Body of pancreas (tissue), 4 donors: ENCODE measurements at regions of chr11 and their contacts with region 1.

Region 1: GRCh38 chr11:31030138-31030792 is 339.3 kb downstream of the DCDC1 start:
- DNase-seq: no peak
- ATAC-seq: no peak
- H3K4me3 ChIP-seq: no peak overlapping the region
- H3K27ac ChIP-seq: no peak overlapping the region
- H3K4me1 ChIP-seq: no peaks in the 10 kb centered on the region
- H3K27me3 ChIP-seq: no peaks in the 10 kb centered on the region
- CTCF ChIP-seq: no peak
- POLR2A ChIP-seq: no peak

Region 2: GRCh38 chr11:30917859-30918478 is 112.3 kb before region 1 on chr11:
- intact Hi-C with region 1: no loop called
- DNase-seq: peak in 3 of 4 donors; percentile 15 to 35 (median 18)
- ATAC-seq: peak; percentile 53
- H3K4me3 ChIP-seq: no peak overlapping the region
- H3K27ac ChIP-seq: no peak overlapping the region
- H3K4me1 ChIP-seq: no peaks in the 10 kb centered on the region
- H3K27me3 ChIP-seq: no peaks in the 10 kb centered on the region
- CTCF ChIP-seq: peak; percentile 38 to 86 (median 65)
- POLR2A ChIP-seq: no peak

Region 3: GRCh38 chr11:30984442-30984816 is 45.8 kb before region 1 on chr11:
- intact Hi-C with region 1: loop called (anchors 10 kb)
- DNase-seq: no peak
- ATAC-seq: no peak
- H3K4me3 ChIP-seq: no peak overlapping the region
- H3K27ac ChIP-seq: no peak overlapping the region
- H3K4me1 ChIP-seq: no peaks in the 10 kb centered on the region
- H3K27me3 ChIP-seq: no peaks in the 10 kb centered on the region
- CTCF ChIP-seq: no peak
- POLR2A ChIP-seq: no peak

Region 4: DNA sequence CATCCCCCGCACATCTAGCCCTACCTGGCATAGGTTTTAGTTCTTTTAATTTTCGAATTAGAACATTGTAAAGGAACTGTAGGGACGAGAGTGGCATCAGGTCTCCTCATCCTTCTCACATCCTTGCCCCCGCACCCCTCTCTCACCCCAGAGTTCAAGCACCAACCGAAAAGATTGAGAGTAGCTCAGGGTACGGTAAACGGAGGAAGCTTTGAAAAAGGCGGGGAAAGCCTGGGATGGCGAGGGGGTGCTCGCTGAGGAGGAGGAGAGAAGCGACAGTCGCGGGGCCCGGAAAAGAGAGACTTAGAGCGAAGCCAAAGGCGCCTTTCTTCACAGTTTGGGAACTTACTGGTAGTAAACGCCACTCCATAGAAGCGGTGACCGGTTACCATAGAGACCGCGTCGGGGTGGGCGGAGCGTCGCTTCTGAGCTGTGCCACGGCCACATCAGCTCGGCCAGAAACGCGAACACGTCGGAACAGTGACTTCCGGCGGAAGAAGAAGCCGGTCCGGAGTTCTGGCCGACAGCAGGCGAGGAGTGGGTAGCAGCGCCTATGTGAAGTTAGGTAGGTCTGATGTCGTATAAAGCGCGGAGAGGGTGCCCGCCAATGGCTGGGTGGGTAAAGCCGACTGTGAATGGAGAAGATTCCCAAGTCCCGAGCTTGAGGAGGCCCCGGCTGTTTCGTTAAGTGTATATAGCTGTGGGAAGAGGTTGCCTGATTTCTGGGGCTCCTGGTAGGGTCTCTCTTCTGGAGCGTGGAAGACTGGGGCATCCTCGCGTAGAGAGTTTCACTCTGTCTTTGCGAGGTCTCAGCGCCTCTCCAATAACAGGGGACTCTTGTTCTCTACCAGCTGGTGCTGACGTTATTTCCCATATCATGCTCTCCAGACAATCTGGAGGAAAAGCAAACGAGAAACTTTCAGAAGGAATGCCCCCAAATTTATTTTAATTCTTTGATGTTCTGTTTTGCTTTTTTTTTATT is 339.4 kb after region 1 on chr11 and contains the starts of genes DCDC1 and DNAJC24:
- intact Hi-C with region 1: no loop called
- DNase-seq: peak; percentile 94 to 96 (median 95)
- ATAC-seq: peak; percentile 100
- H3K4me3 ChIP-seq: peak within 1 kb of the TSS; percentile 41 to 80
- H3K27ac ChIP-seq: peak within 1 kb of the TSS; percentile 44 to 80 (median 74)
- H3K4me1 ChIP-seq: peaks cover 14% of the 10 kb centered on the region
- H3K27me3 ChIP-seq: no peaks in the 10 kb centered on the region
- CTCF ChIP-seq: peak in 1 of 7 experiments; percentile 14
- POLR2A ChIP-seq: peak in 2 of 3 donors; percentile 75 to 77
- total RNA-seq, gene DCDC1: 0.33 to 1.8 TPM
- total RNA-seq, gene DNAJC24: 16.1 to 32.3 TPM